Activated naive CD4-positive, alpha-beta T cell treated with anti-CD3 and anti-CD28 coated beads for 36 hours (primary cell): ENCODE measurements at regions of chr12 and their contacts with region 1.

Region 1: GRCh38 chr12:88141770-88142609 is at the starts of genes CEP290 and TMTC3:
- DNase-seq: peak; percentile 95
- H3K4me3 Mint-ChIP-seq: peak within 1 kb of the TSS; percentile 91
- H3K27ac Mint-ChIP-seq: peak within 1 kb of the TSS; percentile 90
- H3K4me1 Mint-ChIP-seq: peaks cover 40% of the 10 kb centered on the region
- H3K27me3 Mint-ChIP-seq: no peaks in the 10 kb centered on the region
- total RNA-seq, gene CEP290: 12.7 to 13.6 TPM
- total RNA-seq, gene TMTC3: 5.2 TPM

Region 2: GRCh38 chr12:88035271-88035906 is 106.6 kb before region 1 on chr12:
- CTCF ChIA-PET with region 1: no interaction called
- intact Hi-C with region 1: loop called (anchors 1 kb)
- DNase-seq: peak; percentile 89
- H3K4me3 Mint-ChIP-seq: peak overlapping the region; percentile 93
- H3K27ac Mint-ChIP-seq: peak overlapping the region; percentile 90
- H3K4me1 Mint-ChIP-seq: peaks cover 52% of the 10 kb centered on the region
- H3K27me3 Mint-ChIP-seq: no peaks in the 10 kb centered on the region

Region 3: GRCh38 chr12:88111074-88111652 is 30.8 kb before region 1 on chr12:
- CTCF ChIA-PET with region 1: no interaction called
- intact Hi-C with region 1: no loop called
- DNase-seq: no peak
- H3K4me3 Mint-ChIP-seq: no peak overlapping the region
- H3K27ac Mint-ChIP-seq: no peak overlapping the region
- H3K4me1 Mint-ChIP-seq: peaks cover 2% of the 10 kb centered on the region
- H3K27me3 Mint-ChIP-seq: no peaks in the 10 kb centered on the region

Region 4: DNA sequence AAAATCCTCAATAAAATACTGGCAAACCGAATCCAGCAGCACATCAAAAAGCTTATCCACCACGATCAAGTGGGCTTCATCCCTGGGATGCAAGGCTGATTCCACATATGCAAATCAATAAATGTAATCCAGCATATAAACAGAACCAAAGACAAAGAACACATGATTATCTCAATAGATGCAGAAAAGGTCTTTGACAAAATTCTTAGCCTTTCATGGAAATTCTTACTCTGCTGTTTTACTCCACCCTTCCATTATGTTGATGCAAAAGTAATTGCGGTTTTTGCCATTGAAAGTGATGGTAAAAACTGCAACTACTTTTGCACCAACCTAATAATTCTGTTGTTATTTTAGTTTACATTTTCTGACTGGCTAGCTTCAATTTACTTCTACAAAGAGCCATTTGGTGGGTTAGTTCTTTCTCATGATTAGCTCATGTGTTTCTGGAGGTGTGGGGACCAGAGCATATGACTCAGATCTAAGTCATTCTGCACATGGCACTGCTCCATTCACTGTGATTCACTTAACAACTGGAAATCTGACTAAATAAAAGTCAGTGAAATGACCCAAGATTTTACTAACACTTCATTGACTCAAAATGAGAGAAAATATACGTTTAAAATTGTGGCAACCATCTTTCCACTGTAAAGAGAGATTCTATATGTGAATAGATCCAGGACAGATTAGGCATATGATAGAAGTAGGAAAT is 100.0 kb after region 1 on chr12:
- CTCF ChIA-PET with region 1: no interaction called
- intact Hi-C with region 1: loop called (anchors 1 kb)
- DNase-seq: peak; percentile 65
- H3K4me3 Mint-ChIP-seq: no peak overlapping the region
- H3K27ac Mint-ChIP-seq: peak overlapping the region; percentile 68
- H3K4me1 Mint-ChIP-seq: peaks cover 36% of the 10 kb centered on the region
- H3K27me3 Mint-ChIP-seq: peaks cover 14% of the 10 kb centered on the region

Region 5: GRCh38 chr12:88393017-88393767 is 251.2 kb after region 1 on chr12:
- CTCF ChIA-PET with region 1: no interaction called
- intact Hi-C with region 1: loop called (anchors 1 kb)
- DNase-seq: no peak
- H3K4me3 Mint-ChIP-seq: no peak overlapping the region
- H3K27ac Mint-ChIP-seq: no peak overlapping the region
- H3K4me1 Mint-ChIP-seq: no peaks in the 10 kb centered on the region
- H3K27me3 Mint-ChIP-seq: no peaks in the 10 kb centered on the region

Region 6: GRCh38 chr12:88509347-88509746 is 367.4 kb after region 1 on chr12:
- CTCF ChIA-PET with region 1: no interaction called
- intact Hi-C with region 1: no loop called
- DNase-seq: no peak
- H3K4me3 Mint-ChIP-seq: no peak overlapping the region
- H3K27ac Mint-ChIP-seq: no peak overlapping the region
- H3K4me1 Mint-ChIP-seq: no peaks in the 10 kb centered on the region
- H3K27me3 Mint-ChIP-seq: no peaks in the 10 kb centered on the region

Region 7: GRCh38 chr12:89461649-89462612 is 1319.9 kb after region 1 on chr12:
- CTCF ChIA-PET with region 1: no interaction called
- intact Hi-C with region 1: loop called (anchors 10 kb)
- DNase-seq: no peak
- H3K4me3 Mint-ChIP-seq: peak overlapping the region; percentile 15
- H3K27ac Mint-ChIP-seq: peak overlapping the region; percentile 48
- H3K4me1 Mint-ChIP-seq: peaks cover 13% of the 10 kb centered on the region
- H3K27me3 Mint-ChIP-seq: no peaks in the 10 kb centered on the region